Activated B cell treated with CpG ODN at 0.5 μM for 24 hours (primary cell): ENCODE measurements at regions of chr3 and their contacts with region 1.

Region 1: GRCh38 chr3:5122030-5122740 is at the start of gene ARL8B:
- DNase-seq: peak; percentile 93
- ATAC-seq: peak; percentile 95
- H3K4me3 Mint-ChIP-seq: peak within 1 kb of the TSS; percentile 94
- H3K27ac Mint-ChIP-seq: peak within 1 kb of the TSS; percentile 91
- H3K4me1 Mint-ChIP-seq: peaks cover 43% of the 10 kb centered on the region
- H3K27me3 Mint-ChIP-seq: no peaks in the 10 kb centered on the region
- CTCF ChIP-seq: peak; percentile 82
- total RNA-seq, gene ARL8B: 57.9 and 62.6 TPM in 2 replicates

Region 2: GRCh38 chr3:3179407-3180094 is 1942.6 kb before region 1 on chr3 and contains the start of gene CRBN:
- CTCF ChIA-PET with region 1: no interaction called
- POLR2A ChIA-PET with region 1: no interaction called
- intact Hi-C with region 1: loop called (anchors 1 kb)
- DNase-seq: peak; percentile 90
- ATAC-seq: peak; percentile 99
- H3K4me3 Mint-ChIP-seq: peak within 1 kb of the TSS; percentile 91
- H3K27ac Mint-ChIP-seq: peak within 1 kb of the TSS; percentile 72
- H3K4me1 Mint-ChIP-seq: peaks cover 40% of the 10 kb centered on the region
- H3K27me3 Mint-ChIP-seq: no peaks in the 10 kb centered on the region
- CTCF ChIP-seq: peak; percentile 51
- total RNA-seq, gene CRBN: 47.8 and 58.2 TPM in 2 replicates

Region 3: DNA sequence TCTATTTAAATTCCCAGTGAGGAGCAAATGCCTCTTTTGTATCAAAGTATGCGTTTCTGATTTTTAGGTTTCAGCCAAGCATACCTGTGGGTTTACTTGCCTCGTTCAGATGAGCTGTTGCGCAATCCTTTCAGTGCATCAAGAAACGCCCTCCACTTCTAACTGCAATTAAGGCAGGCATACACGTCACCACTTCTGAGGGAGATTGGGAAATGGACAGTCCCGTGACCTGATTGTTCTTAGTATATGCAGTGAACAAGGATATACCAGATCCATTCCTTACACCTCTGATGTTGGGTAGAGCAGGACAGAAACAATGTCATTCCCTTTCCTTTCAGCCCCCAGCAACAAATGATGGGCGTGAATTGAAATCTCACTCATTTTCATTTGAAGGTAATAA is 410.0 kb before region 1 on chr3:
- CTCF ChIA-PET with region 1: interaction called, 6 read pairs
- POLR2A ChIA-PET with region 1: no interaction called
- intact Hi-C with region 1: loop called (anchors 2 kb)
- DNase-seq: no peak
- ATAC-seq: no peak
- H3K4me3 Mint-ChIP-seq: no peak overlapping the region
- H3K27ac Mint-ChIP-seq: no peak overlapping the region
- H3K4me1 Mint-ChIP-seq: peaks cover 2% of the 10 kb centered on the region
- H3K27me3 Mint-ChIP-seq: no peaks in the 10 kb centered on the region
- CTCF ChIP-seq: no peak

Region 4: GRCh38 chr3:5092018-5092417 is 30.2 kb before region 1 on chr3:
- CTCF ChIA-PET with region 1: no interaction called
- POLR2A ChIA-PET with region 1: no interaction called
- intact Hi-C with region 1: no loop called
- DNase-seq: no peak
- ATAC-seq: no peak
- H3K4me3 Mint-ChIP-seq: no peak overlapping the region
- H3K27ac Mint-ChIP-seq: no peak overlapping the region
- H3K4me1 Mint-ChIP-seq: peaks cover 3% of the 10 kb centered on the region
- H3K27me3 Mint-ChIP-seq: peaks cover 30% of the 10 kb centered on the region
- CTCF ChIP-seq: no peak

Region 5: GRCh38 chr3:5187156-5187919 is 65.2 kb after region 1 on chr3 and contains the start of gene EDEM1:
- CTCF ChIA-PET with region 1: interaction called, 3 read pairs
- POLR2A ChIA-PET with region 1: interaction called, 28 read pairs
- intact Hi-C with region 1: loop called (anchors 1 kb)
- DNase-seq: peak; percentile 100
- ATAC-seq: peak; percentile 88
- H3K4me3 Mint-ChIP-seq: peak within 1 kb of the TSS; percentile 98
- H3K27ac Mint-ChIP-seq: peak within 1 kb of the TSS; percentile 99
- H3K4me1 Mint-ChIP-seq: peaks cover 73% of the 10 kb centered on the region
- H3K27me3 Mint-ChIP-seq: no peaks in the 10 kb centered on the region
- CTCF ChIP-seq: no peak
- total RNA-seq, gene EDEM1: 171 and 185 TPM in 2 replicates

Region 6: GRCh38 chr3:5205165-5205941 is 83.2 kb after region 1 on chr3:
- CTCF ChIA-PET with region 1: interaction called, 3 read pairs
- POLR2A ChIA-PET with region 1: interaction called, 11 read pairs
- intact Hi-C with region 1: loop called (anchors 2 kb)
- DNase-seq: peak; percentile 41
- ATAC-seq: peak; percentile 98
- H3K4me3 Mint-ChIP-seq: peak overlapping the region; percentile 37
- H3K27ac Mint-ChIP-seq: peak overlapping the region; percentile 86
- H3K4me1 Mint-ChIP-seq: peaks cover 42% of the 10 kb centered on the region
- H3K27me3 Mint-ChIP-seq: no peaks in the 10 kb centered on the region
- CTCF ChIP-seq: no peak

Region 7: GRCh38 chr3:6799264-6799915 is 1677.2 kb after region 1 on chr3:
- CTCF ChIA-PET with region 1: no interaction called
- POLR2A ChIA-PET with region 1: no interaction called
- intact Hi-C with region 1: loop called (anchors 5 kb)
- DNase-seq: no peak
- ATAC-seq: no peak
- H3K4me3 Mint-ChIP-seq: no peak overlapping the region
- H3K27ac Mint-ChIP-seq: no peak overlapping the region
- H3K4me1 Mint-ChIP-seq: no peaks in the 10 kb centered on the region
- H3K27me3 Mint-ChIP-seq: peaks cover 2% of the 10 kb centered on the region
- CTCF ChIP-seq: peak; percentile 64